ENCODE measurements at regions of chr7 and their contacts with region 1.

Region 1: GRCh38 chr7:130912862-130913631 is 179.0 kb upstream of the KLF14 start:
- DNase-seq: peak; percentile 93
- H3K4me3 Mint-ChIP-seq: peak overlapping the region; percentile 83
- H3K27ac Mint-ChIP-seq: peak overlapping the region; percentile 94
- H3K4me1 Mint-ChIP-seq: peaks cover 91% of the 10 kb centered on the region
- H3K27me3 Mint-ChIP-seq: no peaks in the 10 kb centered on the region

Region 2: GRCh38 chr7:130896898-130897514 is 16.0 kb before region 1 on chr7:
- CTCF ChIA-PET with region 1: interaction called, 16 read pairs
- POLR2A ChIA-PET with region 1: interaction called, 8 read pairs
- intact Hi-C with region 1: loop called (anchors 1 kb)
- DNase-seq: peak; percentile 84
- H3K4me3 Mint-ChIP-seq: peak overlapping the region; percentile 43
- H3K27ac Mint-ChIP-seq: peak overlapping the region; percentile 89
- H3K4me1 Mint-ChIP-seq: peaks cover 95% of the 10 kb centered on the region
- H3K27me3 Mint-ChIP-seq: peaks cover 6% of the 10 kb centered on the region

Region 3: DNA sequence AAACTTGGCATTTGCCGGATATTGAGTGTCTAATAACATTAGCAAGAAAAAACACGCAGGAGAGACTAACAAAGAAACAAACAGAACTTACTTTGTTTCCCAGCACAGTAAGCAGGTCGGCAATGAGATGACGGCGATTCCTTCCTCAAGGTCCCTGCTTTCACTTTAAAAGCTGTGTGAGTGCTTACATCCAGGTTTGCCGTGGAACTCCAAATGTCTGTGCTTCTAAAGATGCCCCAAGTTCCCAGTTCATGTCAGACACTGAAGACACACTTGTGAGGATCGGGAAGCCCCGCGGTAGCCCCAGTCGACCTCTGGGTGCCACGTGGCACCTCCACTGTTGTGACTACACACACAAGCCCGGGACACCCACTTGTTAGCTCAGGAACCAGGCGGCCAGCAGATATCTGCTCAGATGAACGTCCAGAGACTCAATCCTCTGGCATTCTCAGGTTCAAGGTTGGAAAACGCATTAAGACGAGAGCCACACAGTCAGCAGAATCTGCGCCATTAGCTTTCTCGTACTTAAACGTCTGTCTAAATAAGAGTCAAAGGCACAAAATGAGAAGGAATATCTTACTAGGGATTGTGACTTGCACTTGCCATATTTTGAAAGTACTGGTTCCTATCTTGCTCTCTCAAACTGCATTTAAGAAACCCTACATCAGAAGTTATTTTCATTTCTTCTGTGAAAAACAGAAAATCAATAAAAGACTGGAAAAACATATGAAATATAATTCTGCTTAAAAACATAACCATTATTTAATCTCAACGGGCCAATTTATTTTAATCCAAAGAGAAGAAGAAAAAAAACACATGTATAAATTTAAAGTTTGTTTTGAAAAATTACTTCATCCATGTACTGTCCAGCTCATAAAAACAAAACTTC is 28.5 kb after region 1 on chr7:
- CTCF ChIA-PET with region 1: interaction called, 3 read pairs
- POLR2A ChIA-PET with region 1: interaction called, 40 read pairs
- intact Hi-C with region 1: loop called (anchors 1 kb)
- DNase-seq: peak; percentile 63
- H3K4me3 Mint-ChIP-seq: peak overlapping the region; percentile 66
- H3K27ac Mint-ChIP-seq: peak overlapping the region; percentile 87
- H3K4me1 Mint-ChIP-seq: peaks cover 89% of the 10 kb centered on the region
- H3K27me3 Mint-ChIP-seq: no peaks in the 10 kb centered on the region

Region 4: DNA sequence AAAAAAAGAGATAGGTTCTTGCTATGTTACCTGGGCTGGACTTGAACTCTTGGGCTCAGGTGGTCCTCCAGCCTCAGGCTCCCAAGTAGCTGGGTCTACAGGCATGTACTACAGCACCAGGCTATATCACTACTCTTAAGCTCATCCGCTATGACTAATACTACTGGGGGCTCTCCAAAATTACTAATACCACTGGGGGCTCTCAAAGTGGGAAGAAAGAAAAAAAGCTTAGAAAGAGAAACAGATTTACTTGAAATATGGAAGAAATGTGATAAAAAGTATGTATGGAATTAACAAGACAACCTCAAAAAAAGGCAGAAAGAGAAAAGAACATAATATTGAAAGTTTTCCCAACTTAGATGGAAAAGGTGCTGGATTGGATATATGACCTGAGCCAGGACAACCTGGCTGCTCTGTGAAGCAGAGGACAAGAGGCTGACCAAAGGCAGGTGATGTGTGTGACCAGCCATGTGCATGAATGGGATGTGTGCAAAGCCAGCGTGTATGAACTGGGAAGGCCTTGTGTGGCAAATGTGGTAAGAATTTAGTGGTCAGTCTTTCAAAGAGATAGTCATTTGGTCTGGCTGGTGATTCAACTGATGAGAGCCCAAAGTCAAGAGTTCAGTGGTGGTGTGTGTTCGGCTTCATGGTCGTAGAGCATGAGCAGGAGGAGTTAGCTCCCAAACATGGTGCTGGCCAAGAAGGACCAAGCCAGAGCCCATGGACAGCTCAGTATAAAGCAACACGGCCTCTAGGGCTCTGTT is 53.4 kb after region 1 on chr7:
- CTCF ChIA-PET with region 1: no interaction called
- POLR2A ChIA-PET with region 1: interaction called, 32 read pairs
- intact Hi-C with region 1: loop called (anchors 1 kb)
- DNase-seq: peak; percentile 53
- H3K4me3 Mint-ChIP-seq: peak overlapping the region; percentile 42
- H3K27ac Mint-ChIP-seq: peak overlapping the region; percentile 94
- H3K4me1 Mint-ChIP-seq: peaks cover 77% of the 10 kb centered on the region
- H3K27me3 Mint-ChIP-seq: no peaks in the 10 kb centered on the region

Region 5: GRCh38 chr7:131027287-131027773 is 114.3 kb after region 1 on chr7:
- CTCF ChIA-PET with region 1: no interaction called
- POLR2A ChIA-PET with region 1: interaction called, 3 read pairs
- intact Hi-C with region 1: loop called (anchors 1 kb)
- DNase-seq: peak; percentile 66
- H3K4me3 Mint-ChIP-seq: peak overlapping the region; percentile 36
- H3K27ac Mint-ChIP-seq: peak overlapping the region; percentile 79
- H3K4me1 Mint-ChIP-seq: peaks cover 87% of the 10 kb centered on the region
- H3K27me3 Mint-ChIP-seq: no peaks in the 10 kb centered on the region

Region 6: DNA sequence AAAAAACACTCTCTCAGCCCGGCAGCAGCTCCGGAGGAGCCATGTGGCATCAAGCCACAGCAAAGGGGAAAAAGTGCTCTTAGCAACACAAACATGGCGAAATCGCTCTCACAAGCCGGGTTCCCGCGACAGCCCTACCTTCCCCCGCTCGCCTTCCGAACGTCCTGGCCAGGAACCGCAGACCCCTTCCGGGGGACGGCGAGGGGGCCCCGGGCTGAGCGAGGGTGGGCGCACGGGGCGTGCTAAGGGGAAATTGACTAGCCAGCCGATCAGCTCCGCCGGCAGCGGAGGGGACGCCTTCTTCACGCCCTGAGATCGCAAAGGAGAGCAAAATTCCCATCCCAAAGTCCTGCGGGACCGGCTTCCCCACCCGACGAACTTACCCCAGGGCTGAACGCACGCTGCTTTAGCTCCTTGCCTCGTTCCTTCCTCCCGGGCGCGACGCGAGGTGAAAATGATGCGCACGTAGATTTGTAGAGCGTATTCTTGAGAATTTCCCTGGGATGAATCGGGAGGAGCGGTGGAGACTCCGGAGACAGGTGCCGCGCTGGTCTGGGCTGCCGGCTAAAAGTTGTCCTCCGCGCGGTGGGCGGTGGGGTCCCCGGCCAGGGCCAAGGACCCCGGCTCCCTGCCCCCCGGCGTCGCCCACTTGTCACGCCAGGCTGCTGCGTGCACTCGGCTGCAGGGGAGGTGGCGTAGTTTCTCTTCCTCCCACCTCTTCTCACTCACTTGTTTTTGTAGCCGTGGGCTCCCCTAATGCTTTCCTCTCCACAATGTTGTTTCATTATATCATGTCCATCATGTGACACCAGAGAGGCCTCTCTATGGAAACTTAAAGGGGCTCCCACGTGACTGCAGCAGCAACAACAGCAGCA is 194.5 kb after region 1 on chr7:
- CTCF ChIA-PET with region 1: no interaction called
- POLR2A ChIA-PET with region 1: no interaction called
- intact Hi-C with region 1: loop called (anchors 2 kb)
- DNase-seq: peak; percentile 83
- H3K4me3 Mint-ChIP-seq: peak overlapping the region; percentile 94
- H3K27ac Mint-ChIP-seq: peak overlapping the region; percentile 97
- H3K4me1 Mint-ChIP-seq: peaks cover 53% of the 10 kb centered on the region
- H3K27me3 Mint-ChIP-seq: no peaks in the 10 kb centered on the region

Region 7: DNA sequence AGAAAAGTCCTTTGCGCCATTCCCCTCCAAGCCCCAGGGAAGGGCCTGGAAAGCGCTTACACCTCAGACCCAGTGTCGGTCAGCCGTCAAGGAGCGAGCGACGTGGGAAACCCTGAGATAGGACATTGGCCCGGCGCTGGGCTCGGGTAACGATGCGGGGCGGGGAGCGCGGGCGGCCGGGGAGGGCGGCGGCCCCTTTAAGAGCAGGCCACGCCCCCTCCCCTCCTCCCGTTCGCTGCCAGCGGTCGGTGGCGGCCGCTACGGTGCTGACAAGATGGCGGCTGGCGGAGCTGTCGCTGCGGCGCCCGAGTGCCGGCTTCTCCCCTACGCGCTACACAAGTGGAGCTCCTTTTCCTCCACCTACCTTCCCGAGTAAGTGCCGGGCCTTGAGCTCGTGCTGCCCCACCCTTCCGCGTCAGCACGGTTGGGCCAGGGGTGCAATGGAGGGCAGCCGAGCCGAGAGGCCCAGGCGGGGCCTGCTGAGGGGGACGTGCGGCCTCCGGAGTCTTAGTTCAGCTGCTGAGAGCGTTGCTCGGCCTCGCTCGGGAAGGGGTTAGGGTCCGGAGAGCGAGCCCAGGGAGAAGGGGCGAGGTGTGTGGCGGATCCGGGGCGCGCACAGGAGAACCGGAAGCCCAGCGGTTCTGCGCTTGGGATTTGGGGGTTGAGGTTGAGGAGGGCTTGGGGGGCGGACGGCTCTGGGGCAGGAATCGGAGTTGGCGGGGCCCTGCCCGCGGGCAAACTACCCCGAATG is 414.8 kb after region 1 on chr7 and contains the start of gene MKLN1:
- CTCF ChIA-PET with region 1: no interaction called
- POLR2A ChIA-PET with region 1: no interaction called
- intact Hi-C with region 1: loop called (anchors 5 kb)
- DNase-seq: peak; percentile 92
- H3K4me3 Mint-ChIP-seq: peak within 1 kb of the TSS; percentile 90
- H3K27ac Mint-ChIP-seq: peak within 1 kb of the TSS; percentile 95
- H3K4me1 Mint-ChIP-seq: peaks cover 59% of the 10 kb centered on the region
- H3K27me3 Mint-ChIP-seq: no peaks in the 10 kb centered on the region
- total RNA-seq, gene MKLN1: 33.0 to 33.8 TPM